ENCODE measurements at regions of chr22 and their contacts with region 1.

Region 1: GRCh38 chr22:36301384-36301828 is 48.5 kb downstream of the APOL1 start:
- DNase-seq: peak in 4 of 5 donors; percentile 73 to 85 (median 75)
- ATAC-seq: peak; percentile 28 to 61 (median 54)
- H3K4me3 ChIP-seq: no peak overlapping the region
- H3K27ac ChIP-seq: peak overlapping the region in 3 of 12 donors; percentile 25 to 74 (median 46)
- H3K4me1 ChIP-seq: peaks cover 0 to 8% (median 0%) of the 10 kb centered on the region in 12 donors
- H3K27me3 ChIP-seq: no peaks in the 10 kb centered on the region
- CTCF ChIP-seq: peak; percentile 90 to 98 (median 94)
- POLR2A ChIP-seq: no peak

Region 2: DNA sequence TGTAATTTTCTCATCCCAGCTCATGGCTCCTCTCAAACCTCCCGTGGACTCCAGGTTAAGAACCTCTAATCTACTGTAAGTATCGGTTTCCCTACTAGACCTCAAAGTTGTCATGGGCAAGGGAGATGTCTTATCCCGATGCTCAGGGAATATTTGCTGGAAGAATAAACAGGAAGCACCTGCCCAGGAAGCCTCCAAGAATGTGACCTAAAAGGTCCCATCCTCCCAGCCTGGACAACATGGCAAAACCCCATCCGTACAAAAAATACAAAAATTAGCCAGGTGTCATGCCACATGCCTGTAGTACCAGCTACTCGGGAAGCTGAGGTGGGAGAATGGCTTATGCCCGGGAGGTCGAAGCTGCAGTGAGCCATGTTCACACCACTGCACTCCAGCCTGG is 13.9 kb after region 1 on chr22:
- intact Hi-C with region 1: loop called in 1 of 10 experiments (anchors 2 kb)
- DNase-seq: no peak
- ATAC-seq: peak in 1 of 4 donors; percentile 18
- H3K4me3 ChIP-seq: no peak overlapping the region
- H3K27ac ChIP-seq: peak overlapping the region in 7 of 12 donors; percentile 9 to 61 (median 30)
- H3K4me1 ChIP-seq: peaks cover 0 to 12% (median 4%) of the 10 kb centered on the region in 12 donors
- H3K27me3 ChIP-seq: no peaks in the 10 kb centered on the region
- CTCF ChIP-seq: no peak
- POLR2A ChIP-seq: no peak

Region 3: GRCh38 chr22:36470162-36470993 is 169.0 kb after region 1 on chr22:
- intact Hi-C with region 1: loop called (anchors 1 to 5 kb)
- DNase-seq: peak; percentile 85 to 89 (median 87)
- ATAC-seq: peak; percentile 49 to 74 (median 69)
- H3K4me3 ChIP-seq: no peak overlapping the region
- H3K27ac ChIP-seq: peak overlapping the region in 11 of 12 donors; percentile 42 to 98 (median 94)
- H3K4me1 ChIP-seq: peaks cover 0 to 70% (median 60%) of the 10 kb centered on the region in 12 donors
- H3K27me3 ChIP-seq: no peaks in the 10 kb centered on the region
- CTCF ChIP-seq: peak; percentile 93 to 100 (median 97)
- POLR2A ChIP-seq: no peak